ENCODE measurements at regions of chrX and their contacts with region 1.

Region 1: GRCh38 chrX:40175511-40176350 is 78.0 kb upstream of the BCOR start:
- DNase-seq: peak; percentile 81 to 85 (median 84)
- H3K4me3 ChIP-seq: peak overlapping the region; percentile 23 to 67
- H3K4me3 Mint-ChIP-seq: peak overlapping the region; percentile 84 to 94 (median 92)
- H3K27ac ChIP-seq: peak overlapping the region; percentile 84
- H3K27ac Mint-ChIP-seq: peak overlapping the region; percentile 97 to 100 (median 98)
- H3K4me1 ChIP-seq: peaks cover 29% of the 10 kb centered on the region
- H3K4me1 Mint-ChIP-seq: peaks cover 17 to 51% (median 24%) of the 10 kb centered on the region in 4 donors
- H3K27me3 ChIP-seq: no peaks in the 10 kb centered on the region
- H3K27me3 Mint-ChIP-seq: no peaks in the 10 kb centered on the region

Region 2: GRCh38 chrX:40013266-40014195 is 162.2 kb before region 1 on chrX:
- CTCF ChIA-PET with region 1: no interaction called
- POLR2A ChIA-PET with region 1: interaction called, 18 read pairs
- intact Hi-C with region 1: loop called (anchors 5 kb)
- DNase-seq: peak in 2 of 5 donors; percentile 28 to 31
- H3K4me3 ChIP-seq: peak overlapping the region in 1 of 2 donors; percentile 49
- H3K4me3 Mint-ChIP-seq: peak overlapping the region; percentile 64 to 84 (median 78)
- H3K27ac ChIP-seq: no peak overlapping the region
- H3K27ac Mint-ChIP-seq: peak overlapping the region in 2 of 7 donors; percentile 40 to 60
- H3K4me1 ChIP-seq: peaks cover 22% of the 10 kb centered on the region
- H3K4me1 Mint-ChIP-seq: peaks cover 4 to 26% (median 16%) of the 10 kb centered on the region in 4 donors
- H3K27me3 ChIP-seq: no peaks in the 10 kb centered on the region
- H3K27me3 Mint-ChIP-seq: peaks cover 3 to 5% of the 10 kb centered on the region in 2 donors

Region 3: DNA sequence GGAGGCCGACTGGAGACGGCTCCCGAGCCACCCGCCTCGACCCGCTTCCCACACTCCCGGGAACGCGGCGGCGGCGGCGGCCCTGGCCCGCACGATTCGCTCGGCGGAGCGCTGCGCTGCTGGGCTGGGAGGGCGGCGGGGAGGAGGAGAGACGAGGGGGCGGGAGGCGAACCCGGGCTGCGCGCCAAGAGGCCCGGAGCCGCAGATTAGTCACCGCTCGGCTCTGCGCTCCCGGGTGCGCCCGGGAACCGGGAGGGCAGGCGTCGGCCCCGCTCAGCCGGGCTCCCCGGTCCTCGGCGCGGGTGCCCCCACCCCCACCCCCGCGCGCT is 66.8 kb before region 1 on chrX:
- CTCF ChIA-PET with region 1: no interaction called
- POLR2A ChIA-PET with region 1: interaction called, 323 read pairs
- intact Hi-C with region 1: loop called (anchors 2 kb)
- DNase-seq: peak; percentile 57 to 72 (median 60)
- H3K4me3 ChIP-seq: peak overlapping the region in 1 of 2 donors; percentile 19
- H3K4me3 Mint-ChIP-seq: peak overlapping the region in 4 of 8 donors; percentile 60 to 75 (median 66)
- H3K27ac ChIP-seq: no peak overlapping the region
- H3K27ac Mint-ChIP-seq: no peak overlapping the region
- H3K4me1 ChIP-seq: peaks cover 20% of the 10 kb centered on the region
- H3K4me1 Mint-ChIP-seq: peaks cover 3 to 18% (median 12%) of the 10 kb centered on the region in 4 donors
- H3K27me3 ChIP-seq: no peaks in the 10 kb centered on the region
- H3K27me3 Mint-ChIP-seq: no peaks in the 10 kb centered on the region

Region 4: GRCh38 chrX:40201329-40201885 is 25.7 kb after region 1 on chrX:
- CTCF ChIA-PET with region 1: no interaction called
- POLR2A ChIA-PET with region 1: interaction called, 12 read pairs
- intact Hi-C with region 1: loop called (anchors 5 kb)
- DNase-seq: peak in 3 of 5 donors; percentile 12 to 47 (median 24)
- H3K4me3 ChIP-seq: no peak overlapping the region
- H3K4me3 Mint-ChIP-seq: peak overlapping the region in 1 of 8 donors; percentile 36
- H3K27ac ChIP-seq: no peak overlapping the region
- H3K27ac Mint-ChIP-seq: peak overlapping the region in 6 of 7 donors; percentile 44 to 89 (median 68)
- H3K4me1 ChIP-seq: peaks cover 9% of the 10 kb centered on the region
- H3K4me1 Mint-ChIP-seq: peaks cover 5 to 17% (median 9%) of the 10 kb centered on the region in 4 donors
- H3K27me3 ChIP-seq: no peaks in the 10 kb centered on the region
- H3K27me3 Mint-ChIP-seq: no peaks in the 10 kb centered on the region

Region 5: GRCh38 chrX:40314070-40314469 is 138.3 kb after region 1 on chrX:
- CTCF ChIA-PET with region 1: no interaction called
- POLR2A ChIA-PET with region 1: no interaction called
- intact Hi-C with region 1: no loop called
- DNase-seq: no peak
- H3K4me3 ChIP-seq: no peak overlapping the region
- H3K4me3 Mint-ChIP-seq: no peak overlapping the region
- H3K27ac ChIP-seq: no peak overlapping the region
- H3K27ac Mint-ChIP-seq: no peak overlapping the region
- H3K4me1 ChIP-seq: no peaks in the 10 kb centered on the region
- H3K4me1 Mint-ChIP-seq: no peaks in the 10 kb centered on the region
- H3K27me3 ChIP-seq: no peaks in the 10 kb centered on the region
- H3K27me3 Mint-ChIP-seq: no peaks in the 10 kb centered on the region

Measured in CD4-positive, alpha-beta memory T cell (primary cell).